Heart left ventricle (tissue), 16 donors: ENCODE measurements at regions of chr5 and their contacts with region 1.

Region 1: GRCh38 chr5:174951146-174951780 is 226.9 kb downstream of the MSX2 start:
- DNase-seq: peak in 4 of 5 donors; percentile 40 to 57 (median 52)
- ATAC-seq: peak in 3 of 4 donors; percentile 80 to 87 (median 83)
- H3K4me3 ChIP-seq: no peak overlapping the region
- H3K27ac ChIP-seq: no peak overlapping the region
- H3K4me1 ChIP-seq: no peaks in the 10 kb centered on the region
- H3K27me3 ChIP-seq: peaks cover 0 to 40% (median 0%) of the 10 kb centered on the region in 9 donors
- CTCF ChIP-seq: peak; percentile 66 to 85 (median 76)
- POLR2A ChIP-seq: no peak

Region 2: GRCh38 chr5:175444060-175444904 is 493.0 kb after region 1 on chr5 and contains the start of gene DRD1:
- intact Hi-C with region 1: loop called (anchors 1 to 5 kb)
- DNase-seq: peak in 1 of 5 donors; percentile 32
- ATAC-seq: peak in 2 of 4 donors; percentile 79 to 81
- H3K4me3 ChIP-seq: peak within 1 kb of the TSS in 9 of 12 donors; percentile 15 to 42 (median 34)
- H3K27ac ChIP-seq: no peak within 1 kb of the TSS
- H3K4me1 ChIP-seq: peaks cover 0 to 17% (median 4%) of the 10 kb centered on the region in 12 donors
- H3K27me3 ChIP-seq: peaks cover 22 to 90% (median 52%) of the 10 kb centered on the region in 9 donors
- CTCF ChIP-seq: peak; percentile 38 to 77 (median 60)
- POLR2A ChIP-seq: no peak
- total RNA-seq, gene DRD1: 0.07 to 0.11 (median 0.10) TPM in 3 of 9 donors, not detected in the others

Region 3: GRCh38 chr5:175464074-175464941 is 513.0 kb after region 1 on chr5:
- intact Hi-C with region 1: loop called in 2 of 10 experiments (anchors 5 kb)
- DNase-seq: peak in 2 of 5 donors; percentile 20 to 34
- ATAC-seq: peak in 3 of 4 donors; percentile 65 to 79 (median 71)
- H3K4me3 ChIP-seq: no peak overlapping the region
- H3K27ac ChIP-seq: no peak overlapping the region
- H3K4me1 ChIP-seq: peaks cover 0 to 3% (median 0%) of the 10 kb centered on the region in 12 donors
- H3K27me3 ChIP-seq: peaks cover 0 to 8% (median 0%) of the 10 kb centered on the region in 9 donors
- CTCF ChIP-seq: peak; percentile 41 to 72 (median 62)
- POLR2A ChIP-seq: no peak